AG04449 (cell line): ENCODE measurements at regions of chr21 and their contacts with region 1.

Region 1: DNA sequence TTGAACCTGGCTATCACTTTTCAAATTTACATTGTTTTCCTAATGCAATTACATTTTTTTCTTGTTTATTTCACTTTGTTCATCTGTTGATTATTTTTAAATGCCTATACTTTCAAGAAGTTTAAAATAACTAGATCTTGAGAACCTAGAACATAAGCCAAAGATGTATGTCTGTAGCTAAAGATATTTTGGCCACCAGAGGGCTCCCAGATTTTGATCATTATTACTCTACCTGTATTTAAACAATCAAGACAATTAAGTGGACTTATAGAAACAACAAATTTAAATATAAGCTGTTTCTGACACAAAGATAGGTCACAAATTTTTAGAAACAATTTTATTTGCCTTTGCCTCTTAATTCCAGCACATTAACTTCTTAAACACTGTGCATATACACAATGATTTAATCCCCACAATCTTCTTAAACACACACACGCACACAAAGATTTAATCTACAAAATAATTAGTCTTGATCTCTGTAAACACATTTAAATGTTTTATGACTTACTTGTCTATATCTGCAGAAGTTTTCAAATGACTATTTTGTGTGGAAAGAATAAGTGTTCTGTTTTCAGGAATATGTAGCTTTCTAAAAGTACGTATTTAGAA is 380.0 kb downstream of the DSCAM start:
- DNase-seq: no peak
- H3K4me3 ChIP-seq: no peak overlapping the region
- CTCF ChIP-seq: peak; percentile 30

Region 2: GRCh38 chr21:40841524-40842202 is 374.7 kb after region 1 on chr21:
- CTCF ChIA-PET with region 1: interaction called, 51 read pairs
- POLR2A ChIA-PET with region 1: no interaction called
- DNase-seq: no peak
- H3K4me3 ChIP-seq: peak overlapping the region; percentile 51
- CTCF ChIP-seq: peak; percentile 79

Region 3: GRCh38 chr21:40846587-40847411 is 379.8 kb after region 1 on chr21 and contains the start of gene DSCAM:
- CTCF ChIA-PET with region 1: interaction called, 51 read pairs
- POLR2A ChIA-PET with region 1: no interaction called
- DNase-seq: no peak
- H3K4me3 ChIP-seq: peak within 1 kb of the TSS; percentile 48
- CTCF ChIP-seq: no peak